ENCODE measurements at regions of chr12 and their contacts with region 1.

Region 1: DNA sequence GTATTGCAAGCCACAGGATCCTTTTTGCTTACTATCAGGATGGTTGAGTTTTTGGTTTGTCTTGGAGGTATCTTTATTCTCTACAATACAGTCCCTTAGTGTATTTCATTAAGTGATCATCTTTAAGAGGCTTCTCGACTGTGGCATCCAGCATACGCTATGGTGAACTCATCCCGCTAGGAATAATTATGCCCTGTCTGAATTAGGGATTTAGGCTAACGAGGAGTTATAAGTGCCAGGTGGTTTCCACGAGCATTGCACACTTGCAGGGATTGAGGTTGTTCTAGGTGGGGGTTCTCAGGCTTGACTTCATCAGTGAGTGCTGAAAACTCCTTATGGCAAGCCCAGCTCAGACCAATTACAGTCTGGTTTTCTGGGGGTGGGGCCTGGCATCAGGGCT is 37.2 kb upstream of the RBM19 start:
- DNase-seq: no peak
- H3K4me3 ChIP-seq: no peak overlapping the region
- H3K27ac ChIP-seq: no peak overlapping the region
- H3K4me1 ChIP-seq: no peaks in the 10 kb centered on the region
- H3K27me3 ChIP-seq: peaks cover 0 to 21% of the 10 kb centered on the region in 2 donors
- CTCF ChIP-seq: no peak
- POLR2A ChIP-seq: no peak

Region 2: DNA sequence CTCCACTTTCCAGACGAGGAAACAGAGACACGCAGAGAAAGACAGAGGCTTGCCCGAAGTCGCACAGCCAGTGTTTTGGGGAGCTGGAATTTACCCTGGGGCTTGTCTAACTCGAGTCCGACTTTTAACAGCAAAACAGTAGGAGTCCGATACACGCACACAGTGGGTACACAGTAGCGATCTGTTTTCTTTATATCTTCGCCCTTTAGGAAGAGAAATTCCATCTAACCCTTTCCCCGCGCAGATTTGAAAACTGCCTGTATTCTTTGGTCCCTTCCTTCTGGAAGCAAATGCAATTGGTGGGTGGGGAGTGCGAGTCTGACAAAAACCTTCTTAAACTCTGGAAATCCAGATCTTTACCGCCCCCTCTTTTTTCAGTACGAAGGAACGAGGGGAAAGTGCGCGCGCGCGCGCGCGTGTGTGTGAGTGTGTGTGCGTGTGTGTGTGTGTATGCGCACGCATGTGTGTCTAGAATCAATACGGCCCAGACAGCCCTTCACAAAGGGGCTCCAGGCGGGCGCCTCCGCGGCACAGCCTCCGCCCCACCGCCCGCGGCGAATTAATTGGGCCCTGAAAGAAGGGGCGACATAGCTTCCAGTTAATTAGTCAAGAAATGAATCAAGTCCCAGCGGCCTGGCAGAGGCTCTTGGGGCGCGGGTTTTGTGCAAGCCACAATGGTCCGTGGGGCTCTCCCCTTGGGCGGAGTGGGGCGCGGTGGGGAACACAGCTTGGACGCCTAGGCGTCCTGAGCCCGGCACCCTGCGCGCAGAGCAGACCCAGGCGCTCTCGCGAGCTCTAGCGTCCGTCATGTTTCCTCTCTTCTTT is 694.7 kb after region 1 on chr12:
- intact Hi-C with region 1: loop called (anchors 5 kb)
- DNase-seq: no peak
- H3K4me3 ChIP-seq: peak overlapping the region in 2 of 3 donors; percentile 50 to 71
- H3K27ac ChIP-seq: peak overlapping the region in 1 of 2 donors; percentile 69
- H3K4me1 ChIP-seq: no peaks in the 10 kb centered on the region
- H3K27me3 ChIP-seq: peaks cover 0 to 21% of the 10 kb centered on the region in 2 donors
- CTCF ChIP-seq: no peak
- POLR2A ChIP-seq: no peak

Measured in breast epithelium (tissue), 4 donors.